ENCODE measurements at regions of chr1 and their contacts with region 1.

Region 1: DNA sequence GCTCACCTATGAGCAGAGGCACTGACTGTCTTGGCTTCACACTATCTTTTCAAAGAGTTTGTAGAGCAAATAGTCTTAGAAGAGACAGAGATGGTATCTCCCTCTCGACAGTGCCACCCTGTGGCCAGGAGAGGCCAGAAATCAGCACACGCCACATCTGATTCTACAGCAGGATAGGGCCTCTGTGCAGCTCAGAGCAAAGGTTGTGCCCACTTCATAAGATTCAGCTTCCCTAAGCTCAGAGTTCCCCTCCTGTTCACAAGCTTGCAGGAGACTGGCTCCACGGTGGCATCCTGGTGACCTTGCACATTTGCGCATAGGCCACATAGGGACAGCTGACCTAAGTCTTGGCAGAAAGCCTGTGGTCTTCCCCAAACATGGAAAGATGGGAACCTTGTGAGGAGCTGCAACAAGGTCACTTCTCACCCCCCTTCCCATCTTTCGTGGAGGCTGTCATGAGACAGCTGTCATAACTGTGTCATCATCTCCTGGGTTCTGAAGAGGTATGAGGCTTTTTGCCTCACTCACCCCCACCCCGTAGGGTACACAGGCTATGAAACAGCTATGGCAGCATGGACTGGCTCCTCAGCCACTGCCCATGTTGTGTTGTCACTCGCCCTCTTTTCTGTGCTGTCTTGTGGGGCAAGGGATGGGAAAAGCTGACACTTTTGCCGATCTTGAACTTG is 3.0 kb downstream of the ITLN2 start:
- DNase-seq: peak; percentile 85
- H3K4me3 Mint-ChIP-seq: no peak overlapping the region
- H3K27ac Mint-ChIP-seq: no peak overlapping the region
- H3K4me1 Mint-ChIP-seq: peaks cover 3% of the 10 kb centered on the region
- H3K27me3 Mint-ChIP-seq: no peaks in the 10 kb centered on the region

Region 2: GRCh38 chr1:160681067-160681890 is 270.3 kb before region 1 on chr1:
- CTCF ChIA-PET with region 1: interaction called, 23 read pairs
- intact Hi-C with region 1: loop called (anchors 1 kb)
- DNase-seq: peak; percentile 96
- H3K4me3 Mint-ChIP-seq: no peak overlapping the region
- H3K27ac Mint-ChIP-seq: peak overlapping the region; percentile 95
- H3K4me1 Mint-ChIP-seq: peaks cover 77% of the 10 kb centered on the region
- H3K27me3 Mint-ChIP-seq: no peaks in the 10 kb centered on the region

Region 3: DNA sequence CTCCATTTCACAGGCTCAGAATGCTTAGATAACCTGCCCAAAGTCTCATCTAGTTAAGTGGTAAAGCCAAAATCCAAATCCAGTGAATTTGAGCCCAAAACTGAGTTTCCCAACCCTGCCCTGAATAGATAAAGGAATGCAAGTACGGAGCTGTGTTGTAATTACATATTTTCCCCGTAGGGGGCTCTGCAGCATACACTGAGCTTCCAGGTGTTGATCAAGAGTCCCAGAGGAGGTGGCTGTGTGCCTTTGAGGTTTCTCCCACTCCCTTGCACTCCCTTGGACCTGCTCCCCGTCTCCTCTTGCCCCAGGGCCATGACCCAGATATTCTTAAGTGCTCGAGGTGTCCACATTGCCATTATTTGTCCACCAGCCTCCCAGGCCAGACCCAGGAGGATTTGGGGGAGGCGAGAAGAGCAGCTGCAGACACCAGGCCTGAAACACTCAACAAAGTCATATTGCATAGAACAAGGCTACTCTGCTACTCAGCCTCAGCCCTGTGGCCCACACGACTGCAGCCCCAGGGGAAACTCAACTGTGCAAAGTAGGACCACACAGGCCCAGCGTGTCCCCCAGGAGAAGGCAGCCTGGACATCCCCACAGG is 174.0 kb before region 1 on chr1:
- CTCF ChIA-PET with region 1: interaction called, 79 read pairs
- intact Hi-C with region 1: loop called (anchors 1 kb)
- DNase-seq: peak; percentile 75
- H3K4me3 Mint-ChIP-seq: no peak overlapping the region
- H3K27ac Mint-ChIP-seq: no peak overlapping the region
- H3K4me1 Mint-ChIP-seq: peaks cover 56% of the 10 kb centered on the region
- H3K27me3 Mint-ChIP-seq: no peaks in the 10 kb centered on the region

Region 4: GRCh38 chr1:160844447-160845232 is 106.9 kb before region 1 on chr1:
- CTCF ChIA-PET with region 1: interaction called, 12 read pairs
- intact Hi-C with region 1: no loop called
- DNase-seq: no peak
- H3K4me3 Mint-ChIP-seq: no peak overlapping the region
- H3K27ac Mint-ChIP-seq: no peak overlapping the region
- H3K4me1 Mint-ChIP-seq: peaks cover 2% of the 10 kb centered on the region
- H3K27me3 Mint-ChIP-seq: no peaks in the 10 kb centered on the region

Region 5: DNA sequence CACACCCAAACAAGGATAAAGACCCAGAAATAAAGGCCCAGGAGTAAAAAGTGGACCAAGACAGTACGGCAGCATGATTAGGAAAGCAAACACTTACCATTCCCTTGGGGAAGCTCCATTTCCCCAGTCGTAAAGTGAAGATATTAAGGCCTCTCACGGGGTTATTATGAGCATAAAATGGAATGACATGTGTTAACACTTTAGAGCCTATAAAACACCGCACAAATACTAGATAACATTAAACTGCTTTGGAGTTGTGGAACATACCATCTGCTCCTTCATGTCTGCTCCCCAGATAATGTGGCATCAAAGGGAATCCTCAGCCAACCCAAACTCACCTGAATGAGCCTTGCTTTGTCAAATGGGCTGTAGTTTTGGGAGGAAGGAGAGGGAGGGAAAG is 11.9 kb after region 1 on chr1:
- CTCF ChIA-PET with region 1: interaction called, 20 read pairs
- intact Hi-C with region 1: no loop called
- DNase-seq: no peak
- H3K4me3 Mint-ChIP-seq: no peak overlapping the region
- H3K27ac Mint-ChIP-seq: no peak overlapping the region
- H3K4me1 Mint-ChIP-seq: no peaks in the 10 kb centered on the region
- H3K27me3 Mint-ChIP-seq: no peaks in the 10 kb centered on the region

Region 6: GRCh38 chr1:161132410-161133219 is 181.0 kb after region 1 on chr1 and contains the start of gene DEDD:
- CTCF ChIA-PET with region 1: no interaction called
- intact Hi-C with region 1: no loop called
- DNase-seq: peak; percentile 95
- H3K4me3 Mint-ChIP-seq: no peak within 1 kb of the TSS
- H3K27ac Mint-ChIP-seq: no peak within 1 kb of the TSS
- H3K4me1 Mint-ChIP-seq: peaks cover 44% of the 10 kb centered on the region
- H3K27me3 Mint-ChIP-seq: no peaks in the 10 kb centered on the region
- total RNA-seq, gene DEDD: 29.7 to 34.0 TPM

Measured in activated naive CD4-positive, alpha-beta T cell treated with anti-CD3 and anti-CD28 coated beads for 36 hours (primary cell).